ENCODE measurements at regions of chr7 and their contacts with region 1.

Region 1: DNA sequence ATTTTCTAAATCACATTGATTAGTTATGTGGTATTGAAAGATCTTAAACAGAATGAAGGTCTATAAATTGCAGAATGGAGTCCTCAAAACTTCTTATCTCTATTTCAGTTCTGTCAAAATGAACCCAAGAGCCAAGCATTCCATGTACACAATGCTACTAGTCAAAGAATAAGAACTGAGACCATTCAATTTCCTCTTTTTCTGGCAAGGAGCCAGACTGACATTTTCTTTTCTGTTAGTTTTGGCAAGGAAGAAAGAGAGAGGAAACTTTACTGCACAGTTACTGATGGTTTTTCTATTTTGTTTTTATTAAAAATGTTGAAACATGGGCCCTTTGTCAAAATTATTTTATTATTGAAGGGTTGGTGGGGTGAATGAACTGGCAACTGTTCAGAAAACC is 181.8 kb upstream of the FERD3L start:
- DNase-seq: no peak
- H3K4me3 ChIP-seq: no peak overlapping the region
- H3K27ac ChIP-seq: no peak overlapping the region
- H3K4me1 ChIP-seq: no peaks in the 10 kb centered on the region
- H3K27me3 ChIP-seq: no peaks in the 10 kb centered on the region
- CTCF ChIP-seq: no peak
- POLR2A ChIP-seq: no peak

Region 2: GRCh38 chr7:21169667-21170580 is 1842.9 kb after region 1 on chr7:
- intact Hi-C with region 1: loop called (anchors 10 kb)
- DNase-seq: no peak
- H3K4me3 ChIP-seq: peak overlapping the region in 1 of 3 donors; percentile 11
- H3K27ac ChIP-seq: no peak overlapping the region
- H3K4me1 ChIP-seq: no peaks in the 10 kb centered on the region
- H3K27me3 ChIP-seq: peaks cover 0 to 21% of the 10 kb centered on the region in 2 donors
- CTCF ChIP-seq: no peak
- POLR2A ChIP-seq: no peak

Measured in breast epithelium (tissue), 4 donors.